SK-N-SH (cell line): ENCODE measurements at regions of chr4 and their contacts with region 1.

Region 1: GRCh38 chr4:183074296-183074990 is 24.6 kb upstream of the WWC2 start:
- DNase-seq: no peak
- H3K4me3 ChIP-seq: no peak overlapping the region
- H3K27ac ChIP-seq: no peak overlapping the region
- H3K4me1 ChIP-seq: peaks cover 0 to 10% of the 10 kb centered on the region in 2 experiments; a peak in 1 of 4 replicates
- H3K27me3 ChIP-seq: no peaks in the 10 kb centered on the region
- CTCF ChIP-seq: no peak
- EP300 ChIP-seq: no peak
- RAD21 ChIP-seq: no peak

Region 2: GRCh38 chr4:182881919-182882318 is 192.5 kb before region 1 on chr4:
- CTCF ChIA-PET with region 1: no interaction called
- POLR2A ChIA-PET with region 1: no interaction called
- DNase-seq: peak; percentile 85
- H3K4me3 ChIP-seq: peak overlapping the region in 1 of 2 experiments; percentile 12; a peak in 1 of 4 replicates
- H3K27ac ChIP-seq: peak overlapping the region in 1 of 2 experiments; percentile 50; a peak in 2 of 4 replicates
- H3K4me1 ChIP-seq: peaks cover 0 to 34% of the 10 kb centered on the region in 2 experiments; a peak in 1 of 4 replicates
- H3K27me3 ChIP-seq: no peaks in the 10 kb centered on the region
- CTCF ChIP-seq: no peak
- EP300 ChIP-seq: no peak; a peak in 1 of 4 replicates
- RAD21 ChIP-seq: no peak

Region 3: DNA sequence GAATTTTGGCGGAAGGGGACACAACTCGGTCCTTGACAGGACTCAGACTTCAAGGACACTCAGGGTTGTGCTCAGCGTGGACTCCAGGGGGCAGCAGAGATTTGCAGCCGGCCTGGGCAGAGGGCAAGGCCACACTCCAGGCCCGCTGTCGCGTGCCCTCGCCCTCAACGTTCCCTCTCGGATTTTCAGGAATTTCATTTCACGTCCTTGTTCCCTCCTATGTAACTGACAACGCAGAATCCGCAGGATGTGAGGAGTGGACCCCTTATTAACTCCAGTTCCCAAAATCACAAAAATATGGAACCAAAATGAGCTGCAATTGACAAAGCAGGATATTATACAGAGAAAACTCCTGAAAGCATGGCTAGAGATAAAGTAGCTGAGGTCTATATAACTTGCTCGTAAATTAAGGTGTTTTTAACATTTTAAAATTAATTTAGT is 136.2 kb before region 1 on chr4:
- CTCF ChIA-PET with region 1: interaction called, 24 read pairs
- POLR2A ChIA-PET with region 1: no interaction called
- DNase-seq: peak; percentile 84
- H3K4me3 ChIP-seq: peak overlapping the region in 1 of 2 experiments; percentile 11; a peak in 1 of 4 replicates
- H3K27ac ChIP-seq: no peak overlapping the region
- H3K4me1 ChIP-seq: no peaks in the 10 kb centered on the region
- H3K27me3 ChIP-seq: no peaks in the 10 kb centered on the region; the same call in 1 of the 2 replicates
- CTCF ChIP-seq: peak; percentile 96
- EP300 ChIP-seq: no peak
- RAD21 ChIP-seq: peak; percentile 91

Region 4: GRCh38 chr4:183098723-183099536 is 24.5 kb after region 1 on chr4 and contains the start of gene WWC2:
- CTCF ChIA-PET with region 1: interaction called, 15 read pairs
- POLR2A ChIA-PET with region 1: no interaction called
- DNase-seq: peak; percentile 92
- H3K4me3 ChIP-seq: peak within 1 kb of the TSS; percentile 86 to 94
- H3K27ac ChIP-seq: peak within 1 kb of the TSS; percentile 86 to 96
- H3K4me1 ChIP-seq: peaks cover 2 to 38% of the 10 kb centered on the region in 2 experiments
- H3K27me3 ChIP-seq: no peaks in the 10 kb centered on the region
- CTCF ChIP-seq: no peak
- EP300 ChIP-seq: no peak; a peak in 1 of 4 replicates
- RAD21 ChIP-seq: no peak
- polyA plus RNA-seq, gene WWC2: 18.4 and 19.0 TPM in 2 replicates

Region 5: DNA sequence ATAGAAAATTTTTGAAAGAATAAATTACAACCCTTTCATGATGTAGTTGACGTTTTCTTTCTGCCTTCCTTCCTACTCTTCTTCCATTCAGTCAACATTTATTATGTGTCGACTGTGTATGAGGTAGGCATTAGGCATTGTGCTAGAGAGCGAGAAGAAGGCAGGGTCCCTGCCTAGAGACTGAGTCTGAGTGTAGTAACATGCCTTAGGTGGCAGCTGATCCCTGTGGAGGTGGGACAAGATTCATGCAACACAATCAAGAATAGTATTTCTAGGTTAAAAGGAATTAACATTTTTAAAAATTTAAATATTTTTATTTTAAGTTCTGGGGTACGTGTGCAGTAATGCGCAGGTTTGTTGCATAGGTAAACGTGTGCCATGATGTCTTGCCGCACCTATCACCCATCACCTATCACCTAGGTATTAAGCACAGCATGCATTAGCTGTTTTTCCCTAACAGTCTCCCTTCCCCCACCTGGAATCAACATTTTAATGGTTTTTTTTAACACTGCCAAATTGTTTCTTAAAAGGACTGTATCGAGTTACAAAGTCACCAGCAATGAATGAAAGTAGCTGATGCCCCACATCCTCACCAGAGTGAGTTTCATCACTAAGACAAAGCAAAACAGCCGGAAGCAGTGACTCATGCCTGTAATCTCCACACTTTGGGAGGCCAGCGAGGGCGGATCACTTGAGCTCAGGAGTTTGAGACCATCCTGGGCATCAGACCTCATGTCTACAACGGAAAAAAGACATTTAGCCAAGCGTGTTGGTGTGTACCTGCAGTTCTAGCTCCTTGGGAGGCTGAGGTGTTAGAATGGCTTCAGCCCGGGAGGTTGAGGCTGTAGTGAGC is 108.7 kb after region 1 on chr4:
- CTCF ChIA-PET with region 1: no interaction called
- POLR2A ChIA-PET with region 1: no interaction called
- DNase-seq: no peak
- H3K4me3 ChIP-seq: no peak overlapping the region
- H3K27ac ChIP-seq: peak overlapping the region in 1 of 2 experiments; percentile 67; a peak in 2 of 4 replicates
- H3K4me1 ChIP-seq: peaks cover 3 to 36% of the 10 kb centered on the region in 2 experiments; a peak in 2 of 4 replicates
- H3K27me3 ChIP-seq: no peaks in the 10 kb centered on the region
- CTCF ChIP-seq: no peak
- EP300 ChIP-seq: peak in 1 of 2 experiments; percentile 62; a peak in 1 of 4 replicates
- RAD21 ChIP-seq: no peak

Region 6: GRCh38 chr4:183241322-183241640 is 166.8 kb after region 1 on chr4:
- CTCF ChIA-PET with region 1: interaction called, 13 read pairs
- POLR2A ChIA-PET with region 1: no interaction called
- DNase-seq: no peak
- H3K4me3 ChIP-seq: no peak overlapping the region
- H3K27ac ChIP-seq: no peak overlapping the region
- H3K4me1 ChIP-seq: peaks cover 0 to 4% of the 10 kb centered on the region in 2 experiments; a peak in 1 of 4 replicates
- H3K27me3 ChIP-seq: no peaks in the 10 kb centered on the region
- CTCF ChIP-seq: no peak
- EP300 ChIP-seq: no peak
- RAD21 ChIP-seq: no peak

Region 7: GRCh38 chr4:183256756-183257385 is 182.4 kb after region 1 on chr4:
- CTCF ChIA-PET with region 1: interaction called, 109 read pairs
- POLR2A ChIA-PET with region 1: no interaction called
- DNase-seq: peak; percentile 70
- H3K4me3 ChIP-seq: no peak overlapping the region
- H3K27ac ChIP-seq: no peak overlapping the region
- H3K4me1 ChIP-seq: no peaks in the 10 kb centered on the region; a peak in 1 of 4 replicates
- H3K27me3 ChIP-seq: no peaks in the 10 kb centered on the region
- CTCF ChIP-seq: peak; percentile 70
- EP300 ChIP-seq: no peak
- RAD21 ChIP-seq: peak; percentile 70